ENCODE measurements at regions of chr12 and their contacts with region 1.

Region 1: DNA sequence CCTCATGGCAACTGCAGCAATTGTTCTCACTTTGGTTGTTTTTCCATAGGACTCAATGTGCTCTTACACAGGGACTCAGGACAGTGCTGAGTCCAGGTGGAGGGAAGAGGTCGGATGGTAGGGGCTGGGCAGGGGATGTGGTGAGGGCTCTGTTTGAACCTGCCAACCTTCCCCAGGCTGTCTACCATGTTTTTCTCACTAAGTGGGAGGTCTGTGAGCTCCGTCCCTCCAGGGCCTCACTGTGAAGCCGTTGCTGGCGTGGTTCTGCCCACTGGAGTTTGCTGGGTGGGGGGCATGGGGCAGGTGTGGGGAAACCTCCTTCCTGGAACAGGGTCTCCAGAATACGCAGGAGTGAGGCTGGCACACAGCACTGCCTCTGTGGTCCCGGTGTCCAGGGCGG is 20.7 kb upstream of the PRMT8 start:
- DNase-seq: peak; percentile 58

Region 2: DNA sequence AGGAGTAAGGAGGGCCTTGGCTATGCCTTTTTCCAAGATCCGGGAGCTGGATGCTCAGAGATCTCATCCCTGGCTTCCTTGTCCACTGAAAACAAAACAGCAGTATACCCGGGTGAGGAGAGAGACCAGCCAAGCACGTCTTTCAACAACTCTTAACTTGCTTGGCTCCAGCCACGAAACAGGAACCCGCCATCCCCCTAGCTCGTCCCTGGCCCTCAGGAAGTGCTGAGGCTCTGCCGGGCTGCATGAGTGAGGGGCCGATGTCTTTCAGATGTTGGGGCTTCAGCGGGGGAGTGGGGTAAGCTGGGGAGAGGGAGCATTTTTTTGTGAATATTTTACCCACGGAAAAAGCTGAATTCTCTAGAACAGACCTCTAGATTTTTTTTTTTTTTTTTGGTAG is 1186.4 kb before region 1 on chr12:
- intact Hi-C with region 1: no loop called
- DNase-seq: peak; percentile 81

Region 3: DNA sequence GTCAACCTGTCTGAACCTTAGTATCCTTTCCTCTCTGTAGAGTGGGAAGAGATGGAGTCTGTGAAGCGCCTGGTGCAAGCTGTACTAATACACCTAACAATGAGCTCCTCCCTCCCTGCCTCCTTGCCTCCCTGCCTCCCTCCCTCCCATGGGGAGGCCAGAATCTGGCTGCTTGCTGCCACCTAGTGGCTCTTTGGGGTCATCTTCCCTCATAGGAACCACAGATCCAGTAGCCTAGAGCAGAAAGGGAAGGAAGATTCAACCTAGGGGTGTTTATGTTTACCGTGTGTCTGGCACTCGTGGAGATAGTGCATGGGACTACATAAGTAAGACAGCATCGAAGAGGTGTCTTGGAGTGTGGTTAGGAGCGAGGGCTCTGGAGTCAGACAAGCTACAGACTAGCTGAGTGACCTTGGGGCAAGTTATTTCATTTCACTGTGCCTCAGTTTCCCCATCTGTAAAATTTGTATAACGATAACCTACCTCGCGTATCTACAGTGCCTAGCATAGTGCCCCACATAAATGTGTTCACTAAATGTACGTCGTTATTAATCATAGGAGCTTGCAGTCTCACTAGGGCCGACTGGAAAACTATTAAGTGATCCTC is 428.6 kb before region 1 on chr12:
- intact Hi-C with region 1: no loop called
- DNase-seq: no peak

Region 4: DNA sequence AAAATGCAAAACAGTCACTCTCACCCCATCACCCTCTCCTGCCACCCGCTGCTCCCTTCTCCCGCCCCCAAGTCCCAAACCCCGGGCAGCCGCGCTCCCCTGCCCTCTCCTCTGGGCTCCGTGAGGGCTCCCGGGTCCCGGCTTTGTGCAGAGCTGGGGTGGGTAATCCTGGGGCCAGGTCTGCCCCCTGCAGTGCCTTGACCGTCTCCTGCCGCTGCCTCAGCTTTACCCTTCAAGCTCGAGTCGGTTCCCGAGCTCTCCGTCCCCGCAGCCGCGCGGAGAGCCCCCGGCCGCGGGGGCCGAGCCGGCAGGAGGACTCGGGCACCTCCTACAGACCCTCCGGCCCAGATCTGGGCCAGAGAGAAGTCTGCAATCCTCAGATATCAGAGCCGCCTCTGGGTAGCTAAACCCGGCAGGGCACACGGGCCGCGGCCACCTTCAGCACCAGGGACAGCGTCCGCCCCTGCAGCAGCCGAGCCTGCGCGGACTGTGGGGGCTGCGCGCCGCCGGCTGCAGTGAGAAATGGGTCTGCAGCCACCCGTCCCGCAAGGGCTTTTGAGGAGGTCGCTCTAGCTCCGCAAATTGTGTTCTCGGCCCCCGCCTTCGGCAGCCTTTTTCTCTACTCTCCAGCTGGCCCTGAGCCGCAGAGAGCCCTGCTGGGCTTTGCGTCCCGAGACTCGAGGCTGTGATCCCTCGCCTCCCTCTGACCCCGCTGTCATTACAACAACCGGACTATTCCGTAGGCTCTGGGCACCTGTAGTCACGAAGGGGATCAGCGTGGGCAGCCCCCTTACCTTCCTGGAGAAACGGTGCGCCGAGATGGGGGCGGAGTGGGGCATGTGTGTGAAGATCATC is 21.9 kb after region 1 on chr12:
- intact Hi-C with region 1: loop called in 1 of 2 experiments (anchors 1 kb)
- DNase-seq: peak; percentile 82

Measured in posterior vena cava (tissue), 2 donors.